ENCODE measurements at regions of chr2 and their contacts with region 1.

Region 1: DNA sequence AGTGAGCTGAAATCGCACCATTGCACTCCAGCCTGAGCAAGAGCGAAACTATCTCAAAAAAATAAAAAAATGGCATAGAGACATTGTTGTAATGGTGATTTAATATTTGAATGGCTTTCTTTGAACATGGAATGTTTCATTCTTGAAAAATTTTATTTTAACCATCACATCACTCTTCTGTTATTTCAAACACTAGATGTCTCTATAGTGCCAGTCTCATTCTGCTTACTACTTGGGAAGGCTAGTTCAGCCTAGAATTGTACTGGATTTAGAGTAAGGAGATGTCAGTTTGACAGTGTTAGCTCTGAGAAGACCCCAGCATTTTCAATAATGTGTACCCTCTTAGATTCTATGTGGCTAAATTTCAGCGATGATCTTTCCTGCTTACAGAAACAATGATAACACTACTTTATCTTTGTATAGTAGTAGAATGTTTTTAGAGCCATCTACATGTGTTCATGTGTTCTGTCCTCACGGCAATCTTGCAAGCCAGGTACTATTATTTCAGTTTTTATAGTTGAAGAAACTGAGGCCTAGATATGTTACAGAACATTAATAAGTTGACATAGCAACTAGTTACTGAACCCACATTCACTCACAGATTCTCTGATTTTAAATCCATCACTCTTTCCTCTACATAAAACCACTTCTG is 142.9 kb upstream of the ZSWIM2 start:
- DNase-seq: no peak
- ATAC-seq: no peak
- H3K4me3 ChIP-seq: no peak overlapping the region
- H3K27ac ChIP-seq: no peak overlapping the region
- H3K4me1 ChIP-seq: no peaks in the 10 kb centered on the region
- H3K27me3 ChIP-seq: no peaks in the 10 kb centered on the region; the same call in 1 of the 2 replicates
- CTCF ChIP-seq: peak; percentile 19; the same call in 1 of the 2 replicates

Region 2: DNA sequence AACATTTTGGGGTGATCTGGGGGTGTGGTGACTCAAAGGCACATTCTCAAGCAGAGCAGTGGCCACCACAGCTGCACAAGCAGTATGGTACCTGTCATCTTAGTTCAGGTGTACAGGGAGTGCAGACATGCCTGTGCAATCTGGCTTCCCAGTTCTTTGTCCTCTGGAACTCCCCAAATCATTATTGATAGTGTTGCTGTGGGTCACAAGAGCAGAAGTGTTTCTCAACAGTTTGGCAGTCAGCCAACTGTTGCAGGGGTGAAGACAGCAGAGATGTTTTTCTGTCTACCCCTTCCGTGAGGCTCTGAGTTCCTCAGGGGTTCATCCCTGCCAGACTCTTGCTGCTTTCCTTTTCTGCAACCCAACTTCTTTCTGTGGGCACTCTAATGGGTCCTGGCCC is 63.6 kb after region 1 on chr2:
- CTCF ChIA-PET with region 1: no interaction called
- POLR2A ChIA-PET with region 1: interaction called, 10 read pairs
- in situ Hi-C with region 1: no loop called
- intact Hi-C with region 1: no loop called
- DNase-seq: no peak
- ATAC-seq: no peak
- H3K4me3 ChIP-seq: no peak overlapping the region
- H3K27ac ChIP-seq: no peak overlapping the region
- H3K4me1 ChIP-seq: no peaks in the 10 kb centered on the region
- H3K27me3 ChIP-seq: no peaks in the 10 kb centered on the region
- CTCF ChIP-seq: no peak